Mammary epithelial cell (primary cell): ENCODE measurements at regions of chr20 and their contacts with region 1.

Region 1: DNA sequence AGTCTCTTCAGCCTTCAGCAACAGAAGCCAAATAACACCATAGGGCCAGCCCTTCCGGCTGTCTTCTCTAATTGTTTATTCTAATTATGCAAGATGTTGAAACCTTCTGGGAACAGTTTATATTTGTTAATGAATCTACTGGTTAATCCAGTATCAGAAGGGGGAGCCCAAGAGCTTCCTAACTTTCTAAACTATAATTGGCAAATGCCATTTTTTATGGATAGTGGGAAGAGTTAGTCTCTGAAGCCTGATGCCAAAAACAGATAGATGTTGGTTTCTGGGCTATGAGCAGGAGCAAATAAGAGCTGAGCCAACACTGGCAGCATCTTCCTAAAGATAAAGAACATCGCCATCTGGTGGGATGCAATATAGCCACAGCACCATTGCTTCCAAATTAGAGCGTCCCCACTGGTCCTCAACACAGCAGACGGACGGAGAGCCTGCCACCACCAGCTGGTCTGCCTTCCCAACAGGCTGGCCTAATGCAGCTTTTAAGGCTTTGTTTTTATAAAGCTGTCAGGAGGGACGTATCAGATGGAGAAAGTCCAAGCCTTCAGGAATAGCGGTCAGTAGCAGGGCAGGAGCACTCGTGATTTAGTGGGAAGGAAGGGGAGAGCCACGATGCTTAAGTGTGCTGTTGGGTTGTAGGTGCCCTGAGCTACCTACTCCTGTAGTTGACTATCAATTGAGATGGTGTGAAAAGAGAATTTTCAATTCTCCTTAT is 118.8 kb downstream of the RALGAPA2 start:
- DNase-seq: peak; percentile 25
- H3K4me3 ChIP-seq: no peak overlapping the region
- H3K27ac ChIP-seq: no peak overlapping the region
- H3K4me1 ChIP-seq: no peaks in the 10 kb centered on the region
- H3K27me3 ChIP-seq: no peaks in the 10 kb centered on the region
- CTCF ChIP-seq: peak; percentile 45 to 57

Region 2: DNA sequence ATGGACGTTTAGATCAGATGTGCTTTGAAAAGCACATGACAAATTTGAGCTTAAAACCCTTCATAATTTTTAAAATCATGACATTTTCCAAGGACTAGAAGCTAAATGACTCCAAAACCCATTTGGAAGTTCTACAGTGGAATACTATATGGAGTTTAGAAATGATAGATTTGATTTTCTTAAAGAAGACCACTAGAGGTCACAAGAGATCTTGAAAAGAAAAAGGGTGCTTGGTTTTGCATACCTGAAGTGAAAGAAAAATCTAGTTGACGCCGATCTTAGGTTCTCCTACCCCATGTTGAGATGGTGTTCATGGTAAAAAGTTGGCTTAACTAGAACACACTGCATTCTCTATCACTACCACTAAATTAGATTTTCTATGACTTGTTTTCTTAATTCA is 509.8 kb before region 1 on chr20:
- CTCF ChIA-PET with region 1: no interaction called
- dilution Hi-C with region 1: no loop called
- in situ Hi-C with region 1: loop called in 1 of 2 experiments (anchors 25 kb)
- intact Hi-C with region 1: loop called (anchors 2 kb)
- DNase-seq: peak; percentile 23
- H3K4me3 ChIP-seq: peak overlapping the region in 1 of 3 experiments; percentile 17
- H3K27ac ChIP-seq: no peak overlapping the region
- H3K4me1 ChIP-seq: peaks cover 15% of the 10 kb centered on the region
- H3K27me3 ChIP-seq: peaks cover 1% of the 10 kb centered on the region
- CTCF ChIP-seq: peak; percentile 40 to 44

Region 3: GRCh38 chr20:20130399-20130798 is 463.2 kb before region 1 on chr20:
- CTCF ChIA-PET with region 1: no interaction called
- dilution Hi-C with region 1: no loop called
- in situ Hi-C with region 1: no loop called
- intact Hi-C with region 1: loop called (anchors 5 kb)
- DNase-seq: peak; percentile 42
- H3K4me3 ChIP-seq: no peak overlapping the region
- H3K27ac ChIP-seq: no peak overlapping the region
- H3K4me1 ChIP-seq: no peaks in the 10 kb centered on the region
- H3K27me3 ChIP-seq: no peaks in the 10 kb centered on the region
- CTCF ChIP-seq: peak; percentile 58 to 77

Region 4: DNA sequence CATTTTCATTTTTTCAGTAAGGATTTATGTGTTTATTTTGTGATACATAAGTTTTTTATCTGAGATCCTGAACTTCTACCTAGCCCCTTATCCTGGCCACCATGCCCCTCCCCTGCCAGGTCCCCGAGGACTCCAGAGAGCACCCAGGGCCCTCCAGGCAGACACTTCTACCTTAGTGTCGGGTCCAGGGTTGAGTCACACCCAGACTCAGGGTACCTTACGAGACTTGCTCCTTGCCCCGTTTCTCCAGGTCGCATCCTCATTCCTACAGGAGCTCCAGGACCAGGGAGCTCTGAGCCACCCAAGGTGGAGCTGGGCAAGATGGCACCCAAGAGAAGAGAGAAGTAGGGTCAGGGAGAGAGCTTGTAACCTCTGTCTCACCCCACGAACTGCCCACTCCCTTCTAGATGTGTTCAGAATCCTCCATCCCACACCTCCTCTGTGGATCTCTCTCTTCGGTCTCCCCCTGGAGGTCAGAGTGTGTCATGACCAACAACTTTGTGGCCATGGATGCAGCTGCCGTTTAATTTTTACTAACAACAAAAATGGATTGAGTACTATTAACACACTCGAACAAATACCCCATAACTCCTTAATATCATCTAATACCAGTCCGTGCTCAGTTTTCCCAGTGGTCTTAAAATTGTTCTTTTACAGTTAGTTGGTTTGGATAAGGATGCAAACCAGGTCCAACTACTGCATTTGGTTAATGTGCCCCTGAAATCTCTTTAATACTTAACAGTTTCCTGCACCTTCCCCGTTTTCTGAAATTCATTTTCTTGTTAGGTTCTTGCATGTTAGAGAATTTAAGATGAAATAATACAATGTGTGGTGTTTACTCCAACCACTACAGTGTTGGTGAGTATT is 356.3 kb before region 1 on chr20:
- CTCF ChIA-PET with region 1: no interaction called
- dilution Hi-C with region 1: no loop called
- in situ Hi-C with region 1: no loop called
- intact Hi-C with region 1: loop called (anchors 10 kb)
- DNase-seq: peak; percentile 29
- H3K4me3 ChIP-seq: no peak overlapping the region
- H3K27ac ChIP-seq: no peak overlapping the region
- H3K4me1 ChIP-seq: no peaks in the 10 kb centered on the region
- H3K27me3 ChIP-seq: peaks cover 3% of the 10 kb centered on the region
- CTCF ChIP-seq: peak; percentile 73 to 83

Region 5: GRCh38 chr20:20360464-20360863 is 233.1 kb before region 1 on chr20:
- CTCF ChIA-PET with region 1: no interaction called
- dilution Hi-C with region 1: no loop called
- in situ Hi-C with region 1: no loop called
- intact Hi-C with region 1: loop called (anchors 1 kb)
- DNase-seq: peak; percentile 60
- H3K4me3 ChIP-seq: no peak overlapping the region
- H3K27ac ChIP-seq: no peak overlapping the region
- H3K4me1 ChIP-seq: no peaks in the 10 kb centered on the region
- H3K27me3 ChIP-seq: peaks cover 37% of the 10 kb centered on the region
- CTCF ChIP-seq: peak; percentile 76 to 87

Region 6: GRCh38 chr20:20624914-20625313 is 31.3 kb after region 1 on chr20:
- CTCF ChIA-PET with region 1: no interaction called
- dilution Hi-C with region 1: no loop called
- in situ Hi-C with region 1: no loop called
- intact Hi-C with region 1: no loop called
- DNase-seq: no peak
- H3K4me3 ChIP-seq: no peak overlapping the region
- H3K27ac ChIP-seq: no peak overlapping the region
- H3K4me1 ChIP-seq: no peaks in the 10 kb centered on the region
- H3K27me3 ChIP-seq: no peaks in the 10 kb centered on the region
- CTCF ChIP-seq: no peak

Region 7: DNA sequence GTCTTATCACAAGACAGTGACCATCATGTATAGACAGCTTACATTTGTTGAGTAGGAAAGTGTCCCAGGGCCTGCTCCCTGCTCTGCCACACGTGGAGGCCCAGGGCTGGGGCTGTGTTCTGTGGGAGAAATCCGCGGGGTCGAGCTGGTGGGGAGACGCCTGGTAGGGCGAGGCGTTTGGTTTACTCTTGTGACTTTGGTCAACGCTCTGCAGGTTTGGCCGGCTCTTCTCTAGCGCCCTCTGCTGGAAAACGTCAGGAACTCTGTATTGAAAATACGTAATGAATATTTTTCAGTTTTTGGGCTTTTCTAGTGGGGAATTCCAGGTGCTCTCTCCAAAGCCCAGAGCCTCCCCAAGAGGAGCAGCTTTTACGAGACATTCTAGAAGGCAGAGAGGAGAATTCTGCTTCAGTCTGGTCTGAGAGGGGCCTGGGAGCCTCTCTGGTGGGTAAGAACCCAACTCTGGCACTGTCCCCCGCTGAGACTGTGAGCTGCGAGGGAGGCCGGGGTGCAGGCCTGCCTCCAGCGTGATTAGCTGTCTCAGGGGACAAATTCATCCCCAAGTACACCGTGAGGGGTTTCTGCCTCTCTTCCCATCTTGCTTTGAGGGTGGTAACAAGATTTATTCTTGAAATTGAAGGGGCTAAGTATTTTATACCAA is 231.4 kb after region 1 on chr20:
- CTCF ChIA-PET with region 1: interaction called, 3 read pairs
- dilution Hi-C with region 1: no loop called
- in situ Hi-C with region 1: no loop called
- intact Hi-C with region 1: loop called (anchors 1 kb)
- DNase-seq: no peak
- H3K4me3 ChIP-seq: no peak overlapping the region
- H3K27ac ChIP-seq: no peak overlapping the region
- H3K4me1 ChIP-seq: no peaks in the 10 kb centered on the region
- H3K27me3 ChIP-seq: no peaks in the 10 kb centered on the region
- CTCF ChIP-seq: peak; percentile 72 to 79